ENCODE measurements at regions of chr19 and their contacts with region 1.

Region 1: DNA sequence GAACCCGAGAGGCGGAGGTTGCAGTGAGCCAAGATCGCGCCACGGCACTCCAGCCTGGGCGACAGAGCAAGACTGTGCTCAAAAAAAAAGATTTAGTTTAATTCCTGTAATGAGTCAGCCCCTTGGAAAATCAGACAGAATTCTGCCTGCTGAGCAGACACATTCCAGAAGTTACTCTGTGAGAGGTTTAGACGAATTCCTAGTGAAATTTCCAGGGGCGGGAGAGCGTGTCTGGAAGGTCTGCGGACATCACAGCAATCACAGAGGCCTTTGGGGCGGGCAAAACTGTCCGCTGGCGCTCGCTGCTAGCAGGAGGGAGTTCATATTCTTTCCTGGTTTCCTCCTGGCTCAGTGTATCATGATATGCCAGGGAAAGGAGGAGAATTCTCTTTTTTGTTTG is 17.5 kb downstream of the MISP start:
- DNase-seq: peak in 1 of 2 donors; percentile 73
- H3K4me3 ChIP-seq: no peak overlapping the region
- H3K27ac ChIP-seq: no peak overlapping the region
- H3K4me1 ChIP-seq: peaks cover 0 to 18% (median 10%) of the 10 kb centered on the region in 4 donors
- H3K27me3 ChIP-seq: peaks cover 0 to 27% (median 0%) of the 10 kb centered on the region in 3 donors
- CTCF ChIP-seq: no peak
- EP300 ChIP-seq: no peak
- POLR2A ChIP-seq: no peak

Region 2: GRCh38 chr19:858868-859843 is 90.7 kb after region 1 on chr19 and contains the start of gene CFD:
- intact Hi-C with region 1: loop called (anchors 5 kb)
- DNase-seq: peak; percentile 38 to 45
- H3K4me3 ChIP-seq: peak within 1 kb of the TSS; percentile 38 to 48 (median 42)
- H3K27ac ChIP-seq: peak within 1 kb of the TSS; percentile 22 to 74 (median 71)
- H3K4me1 ChIP-seq: peaks cover 29 to 52% (median 43%) of the 10 kb centered on the region in 4 donors
- H3K27me3 ChIP-seq: peaks cover 0 to 79% (median 35%) of the 10 kb centered on the region in 3 donors
- CTCF ChIP-seq: no peak
- EP300 ChIP-seq: no peak
- POLR2A ChIP-seq: no peak
- total RNA-seq, gene CFD: 36.6 to 1,275 (median 118) TPM

Region 3: GRCh38 chr19:917323-918151 is 149.1 kb after region 1 on chr19 and contains the start of gene KISS1R:
- intact Hi-C with region 1: loop called (anchors 5 kb)
- DNase-seq: peak; percentile 44 to 80
- H3K4me3 ChIP-seq: peak within 1 kb of the TSS; percentile 17 to 50 (median 33)
- H3K27ac ChIP-seq: no peak within 1 kb of the TSS
- H3K4me1 ChIP-seq: peaks cover 36 to 65% (median 58%) of the 10 kb centered on the region in 4 donors
- H3K27me3 ChIP-seq: peaks cover 26 to 57% (median 53%) of the 10 kb centered on the region in 3 donors
- CTCF ChIP-seq: peak in 4 of 7 experiments; percentile 9 to 43 (median 20)
- EP300 ChIP-seq: no peak
- POLR2A ChIP-seq: no peak
- total RNA-seq, gene KISS1R: not detected

Region 4: GRCh38 chr19:984165-984967 is 215.9 kb after region 1 on chr19 and contains the start of gene WDR18:
- intact Hi-C with region 1: loop called (anchors 10 kb)
- DNase-seq: peak; percentile 94 to 97
- H3K4me3 ChIP-seq: peak within 1 kb of the TSS; percentile 82 to 99 (median 98)
- H3K27ac ChIP-seq: peak within 1 kb of the TSS; percentile 77 to 95 (median 87)
- H3K4me1 ChIP-seq: peaks cover 12 to 41% (median 38%) of the 10 kb centered on the region in 4 donors
- H3K27me3 ChIP-seq: peaks cover 0 to 9% (median 0%) of the 10 kb centered on the region in 3 donors
- CTCF ChIP-seq: peak in 1 of 7 experiments; percentile 41
- EP300 ChIP-seq: no peak
- POLR2A ChIP-seq: peak in 1 of 4 donors; percentile 10
- total RNA-seq, gene WDR18: 19.1 to 410 (median 67.7) TPM

Measured in stomach (tissue), 19 donors.